GM18951 (cell line): ENCODE measurements at regions of chr9 and their contacts with region 1.

Region 1: DNA sequence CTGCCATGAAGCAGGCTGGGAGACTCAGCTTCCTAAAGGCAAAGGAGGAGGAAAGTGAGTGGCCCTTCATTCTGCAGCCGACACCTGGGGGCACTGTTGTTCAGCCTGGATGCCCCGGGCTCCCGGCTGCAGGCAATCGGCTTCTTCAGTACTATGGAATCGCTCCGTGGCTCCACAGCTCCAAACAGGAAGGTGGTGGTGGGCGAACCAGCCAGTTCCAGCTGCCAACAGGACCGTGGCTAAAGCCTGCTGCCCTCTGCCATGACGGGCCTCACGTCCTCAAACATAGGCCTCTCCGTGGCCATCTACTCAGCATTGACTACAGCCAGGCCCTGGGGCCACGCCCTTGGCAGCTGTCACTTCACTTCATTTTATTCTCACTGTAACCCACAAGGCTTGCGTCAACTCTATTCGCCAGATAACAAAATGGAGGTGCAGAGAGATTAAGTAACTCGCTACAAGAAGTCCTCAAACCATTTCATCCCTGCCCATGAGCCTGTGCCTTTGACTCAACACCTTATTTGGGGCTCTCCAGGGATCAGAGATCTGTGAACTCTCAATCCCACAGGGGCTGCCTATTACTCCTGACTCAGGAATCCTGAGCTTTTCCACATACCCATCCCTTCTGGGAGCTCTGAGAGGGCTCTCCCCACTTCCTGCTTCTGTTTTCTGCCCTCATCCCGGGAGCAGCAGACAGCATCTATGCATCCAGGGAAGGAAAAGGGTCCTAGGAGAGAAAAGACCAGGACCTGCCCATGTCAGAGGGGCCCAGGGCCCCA is 38.0 kb downstream of the PAX5 start:
- POLR2A ChIP-seq: peak; percentile 31

Region 2: DNA sequence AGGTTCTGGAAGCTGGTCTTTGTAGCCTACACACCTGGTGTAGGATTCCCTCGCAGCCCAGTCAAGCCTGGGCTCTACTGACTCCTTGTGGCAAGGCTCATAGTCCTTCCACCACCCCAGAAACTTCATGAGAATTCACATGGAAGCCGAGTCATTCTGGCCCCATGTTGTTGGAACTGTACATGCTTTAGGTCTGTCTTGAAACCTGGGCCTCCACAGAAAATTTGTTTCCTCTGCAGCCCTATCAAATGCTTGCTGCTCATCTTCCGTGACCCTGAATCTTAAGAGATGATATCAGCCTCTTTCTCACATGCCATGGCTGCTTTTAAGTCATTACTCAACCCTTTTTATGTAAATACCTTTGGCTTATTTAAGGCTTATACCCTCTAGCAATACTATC is 313.0 kb after region 1 on chr9:
- in situ Hi-C with region 1: loop called (anchors 10 kb)
- POLR2A ChIP-seq: no peak